Lower leg skin (tissue), 4 donors: ENCODE measurements at regions of chr9 and their contacts with region 1.

Region 1: GRCh38 chr9:34072868-34073590 is 24.3 kb upstream of the UBAP2 start:
- DNase-seq: peak in 1 of 2 donors; percentile 35
- H3K4me3 ChIP-seq: no peak overlapping the region
- CTCF ChIP-seq: no peak
- POLR2A ChIP-seq: no peak

Region 2: DNA sequence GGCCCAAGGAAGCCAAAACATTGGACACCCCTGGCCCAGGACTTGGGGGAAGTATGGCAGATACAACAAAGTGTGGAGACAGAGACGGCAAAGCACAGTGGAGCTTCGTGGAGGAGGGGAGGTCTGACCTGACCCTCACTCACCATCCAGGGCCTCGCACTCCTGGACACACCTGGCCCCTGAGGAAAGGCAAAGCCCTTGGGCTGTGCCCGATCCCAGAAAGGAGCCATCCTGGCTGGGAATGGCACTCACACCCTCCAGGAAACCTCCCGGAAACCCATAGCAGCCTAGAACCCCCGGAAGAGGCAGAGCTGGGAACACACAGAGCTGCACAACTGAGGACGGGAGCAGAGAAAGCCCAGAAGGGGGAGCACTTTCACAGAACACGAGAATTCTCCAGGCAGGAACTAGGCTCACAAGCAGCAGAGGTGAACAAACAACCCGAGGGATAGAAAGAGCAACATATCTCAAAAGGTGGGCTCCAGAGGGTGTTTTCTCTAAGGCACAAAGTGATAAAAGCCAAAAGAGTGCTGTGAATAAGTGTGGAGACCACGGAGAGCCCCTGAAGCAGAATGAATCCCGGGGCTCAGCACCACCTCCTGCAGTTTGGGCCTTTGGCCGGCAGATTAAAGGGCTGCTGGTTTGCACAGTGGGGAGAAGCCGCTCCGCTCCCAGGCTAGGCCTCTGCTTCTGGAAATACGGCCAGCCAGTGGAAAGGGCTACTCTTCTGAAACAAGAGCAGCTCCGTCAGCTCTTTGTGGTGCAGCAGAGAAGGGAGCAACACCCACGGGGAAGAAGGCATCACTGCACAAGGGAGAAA is 147.8 kb before region 1 on chr9:
- intact Hi-C with region 1: loop called (anchors 5 kb)
- DNase-seq: no peak
- H3K4me3 ChIP-seq: no peak overlapping the region
- CTCF ChIP-seq: no peak
- POLR2A ChIP-seq: no peak

Region 3: GRCh38 chr9:34025062-34025461 is 48.0 kb before region 1 on chr9:
- intact Hi-C with region 1: loop called (anchors 10 kb)
- DNase-seq: no peak
- H3K4me3 ChIP-seq: no peak overlapping the region
- CTCF ChIP-seq: no peak
- POLR2A ChIP-seq: no peak